ENCODE measurements at regions of chr10 and their contacts with region 1.

Region 1: DNA sequence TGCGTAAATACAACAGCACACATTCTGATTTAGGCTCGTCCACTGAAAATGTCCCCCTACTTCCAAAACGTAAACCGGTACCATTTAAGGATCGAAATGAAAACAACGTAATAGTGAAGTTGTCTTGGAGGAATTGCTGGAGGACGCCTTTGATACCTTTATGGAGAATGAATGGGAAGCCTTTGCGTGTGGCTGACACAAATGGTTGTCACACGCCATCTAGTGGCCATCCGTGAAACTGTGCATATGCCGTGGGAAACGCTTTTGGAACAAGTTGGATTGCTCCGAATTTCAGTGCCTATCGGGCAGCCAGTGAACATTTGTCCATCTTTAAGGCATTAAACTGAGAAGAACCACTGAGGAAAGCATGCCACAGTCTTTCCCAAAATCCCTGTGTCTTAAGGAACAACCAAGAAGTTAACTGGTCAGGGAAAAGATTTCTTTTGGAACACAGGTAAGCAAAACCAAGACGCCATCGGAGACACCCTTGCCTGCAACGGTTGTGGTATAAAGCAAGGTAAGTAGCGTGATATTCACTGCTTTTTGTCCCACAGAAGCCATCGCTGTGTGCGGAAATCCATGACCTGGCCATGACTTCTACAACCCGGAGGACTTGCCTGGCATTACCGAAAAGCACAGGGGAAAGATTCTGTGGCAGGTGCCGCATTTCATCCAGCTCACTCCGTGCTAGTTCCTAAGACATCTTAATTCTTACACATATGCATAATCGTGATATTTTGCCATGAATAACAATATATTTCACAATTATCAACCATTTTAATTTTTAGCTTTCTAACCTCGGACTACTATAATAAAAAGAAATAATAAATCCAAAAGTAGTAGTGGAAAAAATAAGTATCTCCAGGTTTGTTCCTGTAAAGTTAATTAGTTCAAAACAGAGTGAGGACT is 100.6 kb downstream of the FAM204A start:
- DNase-seq: peak; percentile 86
- H3K4me3 Mint-ChIP-seq: peak overlapping the region; percentile 25
- H3K27ac Mint-ChIP-seq: no peak overlapping the region
- H3K4me1 Mint-ChIP-seq: no peaks in the 10 kb centered on the region
- H3K27me3 Mint-ChIP-seq: peaks cover 73% of the 10 kb centered on the region
- CTCF ChIP-seq: peak; percentile 96

Region 2: GRCh38 chr10:117684672-117685271 is 556.7 kb before region 1 on chr10:
- CTCF ChIA-PET with region 1: no interaction called
- POLR2A ChIA-PET with region 1: no interaction called
- intact Hi-C with region 1: loop called (anchors 5 kb)
- DNase-seq: peak; percentile 91
- H3K4me3 Mint-ChIP-seq: no peak overlapping the region
- H3K27ac Mint-ChIP-seq: no peak overlapping the region
- H3K4me1 Mint-ChIP-seq: peaks cover 9% of the 10 kb centered on the region
- H3K27me3 Mint-ChIP-seq: no peaks in the 10 kb centered on the region
- CTCF ChIP-seq: peak; percentile 40

Region 3: GRCh38 chr10:117876210-117876609 is 365.3 kb before region 1 on chr10:
- CTCF ChIA-PET with region 1: interaction called, 3 read pairs
- POLR2A ChIA-PET with region 1: no interaction called
- intact Hi-C with region 1: loop called (anchors 10 kb)
- DNase-seq: no peak
- H3K4me3 Mint-ChIP-seq: no peak overlapping the region
- H3K27ac Mint-ChIP-seq: no peak overlapping the region
- H3K4me1 Mint-ChIP-seq: no peaks in the 10 kb centered on the region
- H3K27me3 Mint-ChIP-seq: no peaks in the 10 kb centered on the region
- CTCF ChIP-seq: no peak

Region 4: DNA sequence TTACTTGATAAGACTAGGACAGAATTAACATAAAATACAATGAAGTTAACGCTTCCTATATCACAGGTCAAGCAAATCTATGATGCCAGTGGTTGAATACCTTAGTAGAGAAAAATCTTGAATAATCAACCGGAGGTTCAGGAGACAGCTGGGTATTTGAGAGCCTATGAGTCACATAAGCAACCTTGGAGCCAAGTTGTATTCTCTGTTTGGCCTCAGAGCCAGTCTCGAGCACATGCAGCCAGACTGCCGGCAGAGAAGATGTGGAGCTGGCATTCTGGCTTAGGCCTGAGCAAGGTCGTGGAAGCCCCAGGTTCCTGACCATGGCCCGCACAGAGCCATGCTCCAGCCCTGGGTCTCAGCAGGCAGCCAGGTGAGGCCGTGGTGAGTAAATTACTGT is 10.3 kb after region 1 on chr10:
- CTCF ChIA-PET with region 1: interaction called, 11 read pairs
- POLR2A ChIA-PET with region 1: interaction called, 3 read pairs
- intact Hi-C with region 1: no loop called
- DNase-seq: peak; percentile 43
- H3K4me3 Mint-ChIP-seq: no peak overlapping the region
- H3K27ac Mint-ChIP-seq: no peak overlapping the region
- H3K4me1 Mint-ChIP-seq: no peaks in the 10 kb centered on the region
- H3K27me3 Mint-ChIP-seq: peaks cover 7% of the 10 kb centered on the region
- CTCF ChIP-seq: no peak

Region 5: GRCh38 chr10:118423800-118424479 is 182.5 kb after region 1 on chr10:
- CTCF ChIA-PET with region 1: no interaction called
- POLR2A ChIA-PET with region 1: no interaction called
- intact Hi-C with region 1: loop called (anchors 10 kb)
- DNase-seq: peak; percentile 90
- H3K4me3 Mint-ChIP-seq: no peak overlapping the region
- H3K27ac Mint-ChIP-seq: no peak overlapping the region
- H3K4me1 Mint-ChIP-seq: peaks cover 5% of the 10 kb centered on the region
- H3K27me3 Mint-ChIP-seq: peaks cover 4% of the 10 kb centered on the region
- CTCF ChIP-seq: peak; percentile 88